IMR-90 (cell line): ENCODE measurements at regions of chr14 and their contacts with region 1.

Region 1: DNA sequence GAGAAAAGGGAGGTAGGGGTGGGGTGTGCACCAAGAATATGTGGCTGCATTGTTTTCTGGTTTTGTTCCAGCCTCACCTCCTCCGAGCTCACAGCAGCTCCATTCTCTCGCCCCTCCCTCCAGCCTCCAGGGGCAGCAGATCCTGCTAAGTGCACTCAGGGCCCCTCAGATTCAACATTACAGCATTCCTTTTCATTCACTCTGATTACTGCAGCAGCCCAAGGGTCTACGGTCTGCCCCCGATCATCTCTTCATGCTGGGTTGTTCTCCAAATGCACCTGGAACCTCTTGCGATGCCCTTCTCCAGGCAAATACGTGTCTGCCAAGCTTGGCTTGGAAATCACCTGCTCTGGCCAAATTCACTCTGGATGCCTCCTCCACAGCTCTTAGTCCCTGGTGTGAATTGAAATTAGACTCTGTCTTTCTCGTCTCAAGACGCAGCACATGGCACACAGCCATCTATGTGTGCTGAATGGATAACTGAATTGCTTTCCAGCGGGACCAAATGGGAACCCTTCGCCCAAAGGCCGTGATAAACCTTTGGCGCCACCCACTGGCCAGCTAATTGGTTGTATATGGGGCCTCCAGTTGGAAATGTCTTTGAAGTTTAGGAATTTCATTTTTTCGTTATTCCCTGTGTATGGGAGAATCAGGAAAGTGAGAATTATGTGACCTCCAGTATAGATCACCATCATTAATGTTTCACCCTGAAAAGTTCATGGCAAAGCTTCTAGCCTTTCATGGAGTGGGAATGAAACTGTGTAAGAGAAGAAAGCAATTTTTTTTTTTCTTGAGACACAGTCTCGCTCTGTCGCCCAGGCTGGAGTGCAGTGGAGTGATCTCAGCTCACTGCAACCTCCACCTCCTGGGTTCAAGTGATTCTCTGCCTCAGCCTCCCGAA is 9.6 kb upstream of the HSP90AA1 start:
- DNase-seq: peak; percentile 74
- ATAC-seq: peak; percentile 86
- H3K4me3 ChIP-seq: no peak overlapping the region
- H3K27ac ChIP-seq: no peak overlapping the region
- H3K4me1 ChIP-seq: peaks cover 12% of the 10 kb centered on the region
- H3K27me3 ChIP-seq: no peaks in the 10 kb centered on the region
- CTCF ChIP-seq: peak; percentile 92
- POLR2A ChIP-seq: no peak
- RAD21 ChIP-seq: peak; percentile 91

Region 2: GRCh38 chr14:101707068-101707842 is 389.2 kb before region 1 on chr14:
- CTCF ChIA-PET with region 1: no interaction called
- POLR2A ChIA-PET with region 1: no interaction called
- dilution Hi-C with region 1: no loop called
- in situ Hi-C with region 1: no loop called
- intact Hi-C with region 1: loop called (anchors 2 kb)
- DNase-seq: peak; percentile 81
- ATAC-seq: peak; percentile 90
- H3K4me3 ChIP-seq: no peak overlapping the region
- H3K27ac ChIP-seq: no peak overlapping the region
- H3K4me1 ChIP-seq: 0 out of 2 replicates have a peak, but pooled peaks cover 1% of the 10 kb centered on the region
- H3K27me3 ChIP-seq: peaks cover 19% of the 10 kb centered on the region
- CTCF ChIP-seq: peak; percentile 84
- POLR2A ChIP-seq: no peak
- RAD21 ChIP-seq: peak; percentile 91

Region 3: DNA sequence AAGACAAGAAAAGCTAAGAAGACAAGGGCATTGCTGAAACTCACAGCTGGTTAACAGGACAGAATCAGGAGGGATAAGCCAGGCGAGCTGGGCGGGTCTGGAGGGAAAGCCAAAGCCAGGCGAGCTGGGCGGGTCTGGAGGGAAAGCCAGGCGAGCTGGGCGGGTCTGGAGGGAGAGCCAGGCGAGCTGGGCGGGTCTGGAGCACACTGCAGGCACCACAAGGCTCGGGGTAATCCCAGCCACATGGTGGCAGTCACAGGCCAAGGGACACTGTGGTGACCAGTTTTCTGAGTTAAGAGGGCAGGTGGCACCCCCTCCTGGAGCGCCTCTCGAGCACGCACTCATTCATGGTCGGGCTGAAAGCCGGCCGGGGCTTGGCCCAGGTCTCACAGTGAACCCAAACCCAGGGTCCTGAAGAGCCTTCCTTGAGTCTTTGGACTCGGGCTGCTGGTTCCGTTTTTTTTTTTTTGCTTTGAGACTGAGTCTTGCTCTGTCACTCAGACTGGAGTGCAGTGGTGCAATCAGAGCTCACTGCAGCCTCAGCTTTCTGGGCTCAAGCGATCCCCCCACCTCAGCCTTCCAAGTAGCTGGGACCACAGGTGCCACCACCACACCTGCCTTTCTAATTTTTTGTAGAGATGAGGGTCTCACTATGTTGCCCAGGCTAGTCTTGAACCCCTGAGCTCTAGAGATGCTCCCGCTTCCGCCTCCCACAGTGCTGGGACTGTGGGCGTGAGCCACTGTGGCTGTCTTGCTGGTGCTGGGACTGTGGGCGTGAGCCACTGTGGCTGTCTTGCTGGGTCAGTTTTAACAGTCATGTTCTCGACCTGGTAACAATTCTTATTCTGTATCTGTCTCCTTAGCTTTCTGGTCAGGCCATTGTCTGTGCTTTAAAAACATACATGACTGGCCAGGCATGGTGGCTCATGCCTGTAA is 49.9 kb before region 1 on chr14:
- CTCF ChIA-PET with region 1: interaction called, 3 read pairs
- POLR2A ChIA-PET with region 1: no interaction called
- dilution Hi-C with region 1: no loop called
- in situ Hi-C with region 1: no loop called
- intact Hi-C with region 1: loop called (anchors 5 kb)
- DNase-seq: peak; percentile 28
- ATAC-seq: peak; percentile 9
- H3K4me3 ChIP-seq: no peak overlapping the region
- H3K27ac ChIP-seq: no peak overlapping the region
- H3K4me1 ChIP-seq: peaks cover 8% of the 10 kb centered on the region; the same call in 1 of the 2 replicates
- H3K27me3 ChIP-seq: no peaks in the 10 kb centered on the region
- CTCF ChIP-seq: peak; percentile 21; the same call in 1 of the 2 replicates
- POLR2A ChIP-seq: no peak
- RAD21 ChIP-seq: peak; percentile 35; the same call in 1 of the 2 replicates

Region 4: DNA sequence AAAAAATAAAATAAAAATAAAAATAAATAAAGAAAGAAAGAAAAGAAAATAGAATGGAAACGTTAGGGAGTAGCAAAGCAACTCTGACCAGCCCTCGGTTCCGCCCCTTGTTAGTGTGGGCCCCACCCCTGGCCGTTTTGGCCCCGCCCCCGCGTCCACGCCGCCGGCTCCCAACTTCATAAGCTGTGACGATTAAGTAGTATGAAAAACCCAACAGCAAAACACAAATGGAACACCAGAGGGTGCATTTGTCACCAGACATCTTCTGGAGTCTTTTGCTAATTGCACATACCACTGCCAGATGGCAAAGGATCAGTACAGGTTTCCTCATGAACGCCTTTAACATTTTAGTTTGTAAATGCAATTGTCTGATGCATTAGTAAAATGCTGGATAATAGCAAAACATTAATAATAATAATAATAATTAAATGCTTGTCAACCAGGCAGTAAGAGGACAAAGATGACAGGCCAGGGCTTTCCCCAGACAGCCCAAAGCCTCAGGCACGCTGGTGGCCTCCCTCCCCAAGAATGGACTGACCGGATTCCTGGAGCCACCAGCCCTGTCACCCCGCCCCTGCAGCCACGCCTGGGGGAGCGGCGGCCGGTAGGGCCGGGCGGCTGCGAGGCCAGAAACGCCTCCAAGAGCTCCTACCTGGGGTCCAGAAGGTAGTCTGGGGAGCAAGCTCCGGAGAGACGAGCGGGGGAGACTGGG is 33.2 kb before region 1 on chr14:
- CTCF ChIA-PET with region 1: interaction called, 7 read pairs
- POLR2A ChIA-PET with region 1: no interaction called
- dilution Hi-C with region 1: no loop called
- in situ Hi-C with region 1: no loop called
- intact Hi-C with region 1: loop called (anchors 1 kb)
- DNase-seq: peak; percentile 83
- ATAC-seq: peak; percentile 98
- H3K4me3 ChIP-seq: no peak overlapping the region
- H3K27ac ChIP-seq: no peak overlapping the region
- H3K4me1 ChIP-seq: no peaks in the 10 kb centered on the region
- H3K27me3 ChIP-seq: no peaks in the 10 kb centered on the region
- CTCF ChIP-seq: peak; percentile 57
- POLR2A ChIP-seq: no peak
- RAD21 ChIP-seq: peak; percentile 61

Region 5: GRCh38 chr14:102220031-102220430 is 123.6 kb after region 1 on chr14:
- CTCF ChIA-PET with region 1: no interaction called
- POLR2A ChIA-PET with region 1: no interaction called
- dilution Hi-C with region 1: no loop called
- in situ Hi-C with region 1: no loop called
- intact Hi-C with region 1: no loop called
- DNase-seq: no peak
- ATAC-seq: no peak
- H3K4me3 ChIP-seq: no peak overlapping the region
- H3K27ac ChIP-seq: no peak overlapping the region
- H3K4me1 ChIP-seq: peaks cover 13% of the 10 kb centered on the region
- H3K27me3 ChIP-seq: no peaks in the 10 kb centered on the region
- CTCF ChIP-seq: no peak
- POLR2A ChIP-seq: no peak
- RAD21 ChIP-seq: no peak